ENCODE measurements at regions of chr7 and their contacts with region 1.

Region 1: GRCh38 chr7:107044347-107045194 is at the start of gene PRKAR2B:
- DNase-seq: peak; percentile 98 to 100 (median 98)
- ATAC-seq: peak; percentile 83
- H3K4me3 ChIP-seq: peak within 1 kb of the TSS; percentile 84
- H3K27ac ChIP-seq: peak within 1 kb of the TSS; percentile 73
- H3K4me1 ChIP-seq: peaks cover 12 to 39% of the 10 kb centered on the region in 2 experiments
- H3K27me3 ChIP-seq: no peaks in the 10 kb centered on the region
- CTCF ChIP-seq: peak in 2 of 3 experiments; percentile 44 to 54; a peak in 3 of 6 replicates
- EP300 ChIP-seq: no peak; the same call in 1 of the 2 replicates
- POLR2A ChIP-seq: peak; percentile 60; the same call in 1 of the 2 replicates
- RAD21 ChIP-seq: peak; percentile 41 to 54
- polyA plus RNA-seq, gene PRKAR2B: 59.0 to 65.4 TPM

Region 2: DNA sequence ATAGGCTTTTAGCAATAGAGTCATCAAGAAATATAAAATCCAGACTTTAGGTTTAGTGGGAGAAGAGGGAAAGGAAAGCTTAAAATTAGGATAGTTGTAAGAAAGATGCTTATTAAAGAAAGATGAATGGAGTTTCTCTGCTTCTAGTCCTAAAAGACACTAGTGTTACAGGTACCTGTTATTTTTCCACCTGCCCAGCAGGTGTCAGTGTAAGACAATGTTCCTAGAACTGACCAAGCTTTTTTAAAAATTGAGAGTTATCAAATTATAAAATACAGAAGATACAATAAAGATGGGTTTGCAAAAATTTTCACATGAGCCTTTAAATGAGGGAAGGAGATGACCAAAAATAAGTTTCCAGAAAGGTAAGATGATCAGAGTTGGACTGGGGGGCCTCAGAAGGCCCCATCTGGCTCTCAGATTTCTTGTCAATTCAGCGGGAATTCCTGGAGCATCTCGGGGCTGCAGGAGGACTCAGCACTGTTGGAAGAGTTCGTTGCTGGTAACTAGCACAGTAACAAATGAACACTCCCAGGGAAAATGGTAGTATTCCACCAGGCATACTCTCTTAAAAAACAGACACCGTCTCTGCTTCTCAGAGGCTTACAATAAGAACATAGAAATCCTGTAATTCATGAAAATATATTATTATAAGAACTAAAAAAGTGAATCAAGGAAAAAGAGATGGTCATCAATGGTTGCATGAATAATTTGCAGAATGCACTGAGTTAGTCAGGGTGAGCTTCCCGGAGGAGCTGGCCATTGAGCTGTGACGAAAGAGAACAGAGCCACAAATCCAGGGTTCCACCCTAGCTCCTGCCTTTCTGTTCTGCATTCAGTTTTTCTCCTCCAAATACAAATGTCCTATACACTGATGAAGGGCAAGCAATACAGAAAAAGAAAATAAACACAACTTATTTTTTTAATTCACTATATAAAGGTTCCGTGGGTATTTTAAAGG is 251.3 kb before region 1 on chr7:
- CTCF ChIA-PET with region 1: no interaction called
- POLR2A ChIA-PET with region 1: no interaction called
- in situ Hi-C with region 1: no loop called
- intact Hi-C with region 1: loop called (anchors 5 kb)
- DNase-seq: peak; percentile 59 to 78 (median 63)
- ATAC-seq: peak; percentile 53
- H3K4me3 ChIP-seq: no peak overlapping the region
- H3K27ac ChIP-seq: no peak overlapping the region
- H3K4me1 ChIP-seq: peaks cover 0 to 5% of the 10 kb centered on the region in 2 experiments; a peak in 1 of 5 replicates
- H3K27me3 ChIP-seq: no peaks in the 10 kb centered on the region
- CTCF ChIP-seq: peak; percentile 59 to 93 (median 74); a peak in 5 of 6 replicates
- EP300 ChIP-seq: no peak
- POLR2A ChIP-seq: no peak
- RAD21 ChIP-seq: peak; percentile 91 to 94

Region 3: GRCh38 chr7:106840342-106840741 is 204.2 kb before region 1 on chr7:
- CTCF ChIA-PET with region 1: no interaction called
- POLR2A ChIA-PET with region 1: no interaction called
- in situ Hi-C with region 1: no loop called
- intact Hi-C with region 1: no loop called
- DNase-seq: no peak
- ATAC-seq: no peak
- H3K4me3 ChIP-seq: no peak overlapping the region
- H3K27ac ChIP-seq: no peak overlapping the region
- H3K4me1 ChIP-seq: no peaks in the 10 kb centered on the region
- H3K27me3 ChIP-seq: no peaks in the 10 kb centered on the region; a peak in 1 of 5 replicates
- CTCF ChIP-seq: no peak
- EP300 ChIP-seq: no peak
- POLR2A ChIP-seq: no peak
- RAD21 ChIP-seq: no peak

Region 4: GRCh38 chr7:106952658-106953231 is 91.8 kb before region 1 on chr7:
- CTCF ChIA-PET with region 1: interaction called, 4 read pairs
- POLR2A ChIA-PET with region 1: interaction called, 6 read pairs
- in situ Hi-C with region 1: loop called (anchors 5 kb)
- intact Hi-C with region 1: loop called (anchors 1 kb)
- DNase-seq: peak; percentile 66 to 95 (median 78)
- ATAC-seq: peak; percentile 92
- H3K4me3 ChIP-seq: no peak overlapping the region
- H3K27ac ChIP-seq: peak overlapping the region; percentile 45
- H3K4me1 ChIP-seq: peaks cover 19 to 34% of the 10 kb centered on the region in 2 experiments
- H3K27me3 ChIP-seq: no peaks in the 10 kb centered on the region
- CTCF ChIP-seq: no peak
- EP300 ChIP-seq: peak; percentile 84
- POLR2A ChIP-seq: no peak
- RAD21 ChIP-seq: peak; percentile 24 to 46

Region 5: GRCh38 chr7:107014387-107015023 is 30.1 kb before region 1 on chr7:
- CTCF ChIA-PET with region 1: no interaction called
- POLR2A ChIA-PET with region 1: interaction called, 3 read pairs
- in situ Hi-C with region 1: no loop called
- intact Hi-C with region 1: loop called (anchors 1 kb)
- DNase-seq: no peak
- ATAC-seq: no peak
- H3K4me3 ChIP-seq: no peak overlapping the region
- H3K27ac ChIP-seq: peak overlapping the region; percentile 6; the same call in 1 of the 3 replicates
- H3K4me1 ChIP-seq: peaks cover 27 to 61% of the 10 kb centered on the region in 2 experiments
- H3K27me3 ChIP-seq: no peaks in the 10 kb centered on the region
- CTCF ChIP-seq: no peak
- EP300 ChIP-seq: no peak
- POLR2A ChIP-seq: no peak
- RAD21 ChIP-seq: no peak

Region 6: DNA sequence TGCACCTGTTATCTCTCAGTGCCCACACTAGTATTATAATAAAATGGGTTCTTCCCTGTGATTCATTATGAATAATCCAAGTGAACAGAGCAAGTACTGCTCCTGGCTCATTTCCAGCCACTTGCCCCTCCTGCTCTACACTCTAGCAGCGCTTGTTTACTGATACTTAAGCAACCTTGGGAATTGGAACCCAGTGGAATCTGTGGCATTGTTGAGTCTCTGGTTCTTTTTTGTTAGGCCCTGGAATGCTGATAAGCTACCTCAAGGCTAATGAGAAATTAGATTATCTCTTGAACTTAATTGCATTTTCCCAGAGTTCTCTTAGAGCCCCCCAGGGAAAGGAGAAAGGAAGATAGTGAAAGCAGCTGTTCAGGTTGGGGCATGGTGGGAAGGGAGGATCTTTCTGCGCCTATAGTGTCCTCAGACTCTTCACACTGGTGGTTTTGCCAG is 34.0 kb after region 1 on chr7:
- CTCF ChIA-PET with region 1: no interaction called
- POLR2A ChIA-PET with region 1: interaction called, 3 read pairs
- in situ Hi-C with region 1: no loop called
- intact Hi-C with region 1: loop called (anchors 2 kb)
- DNase-seq: peak; percentile 49 to 74 (median 61)
- ATAC-seq: peak; percentile 33
- H3K4me3 ChIP-seq: no peak overlapping the region
- H3K27ac ChIP-seq: peak overlapping the region; percentile 65
- H3K4me1 ChIP-seq: peaks cover 27 to 64% of the 10 kb centered on the region in 2 experiments
- H3K27me3 ChIP-seq: no peaks in the 10 kb centered on the region
- CTCF ChIP-seq: no peak
- EP300 ChIP-seq: no peak
- POLR2A ChIP-seq: no peak
- RAD21 ChIP-seq: no peak

Region 7: GRCh38 chr7:107090457-107090856 is 45.9 kb after region 1 on chr7:
- CTCF ChIA-PET with region 1: no interaction called
- POLR2A ChIA-PET with region 1: no interaction called
- in situ Hi-C with region 1: no loop called
- intact Hi-C with region 1: no loop called
- DNase-seq: peak in 1 of 4 experiments; percentile 49
- ATAC-seq: peak; percentile 70
- H3K4me3 ChIP-seq: no peak overlapping the region
- H3K27ac ChIP-seq: no peak overlapping the region
- H3K4me1 ChIP-seq: peaks cover 21 to 38% of the 10 kb centered on the region in 2 experiments
- H3K27me3 ChIP-seq: no peaks in the 10 kb centered on the region
- CTCF ChIP-seq: no peak
- EP300 ChIP-seq: no peak
- POLR2A ChIP-seq: no peak
- RAD21 ChIP-seq: no peak

Region 8: DNA sequence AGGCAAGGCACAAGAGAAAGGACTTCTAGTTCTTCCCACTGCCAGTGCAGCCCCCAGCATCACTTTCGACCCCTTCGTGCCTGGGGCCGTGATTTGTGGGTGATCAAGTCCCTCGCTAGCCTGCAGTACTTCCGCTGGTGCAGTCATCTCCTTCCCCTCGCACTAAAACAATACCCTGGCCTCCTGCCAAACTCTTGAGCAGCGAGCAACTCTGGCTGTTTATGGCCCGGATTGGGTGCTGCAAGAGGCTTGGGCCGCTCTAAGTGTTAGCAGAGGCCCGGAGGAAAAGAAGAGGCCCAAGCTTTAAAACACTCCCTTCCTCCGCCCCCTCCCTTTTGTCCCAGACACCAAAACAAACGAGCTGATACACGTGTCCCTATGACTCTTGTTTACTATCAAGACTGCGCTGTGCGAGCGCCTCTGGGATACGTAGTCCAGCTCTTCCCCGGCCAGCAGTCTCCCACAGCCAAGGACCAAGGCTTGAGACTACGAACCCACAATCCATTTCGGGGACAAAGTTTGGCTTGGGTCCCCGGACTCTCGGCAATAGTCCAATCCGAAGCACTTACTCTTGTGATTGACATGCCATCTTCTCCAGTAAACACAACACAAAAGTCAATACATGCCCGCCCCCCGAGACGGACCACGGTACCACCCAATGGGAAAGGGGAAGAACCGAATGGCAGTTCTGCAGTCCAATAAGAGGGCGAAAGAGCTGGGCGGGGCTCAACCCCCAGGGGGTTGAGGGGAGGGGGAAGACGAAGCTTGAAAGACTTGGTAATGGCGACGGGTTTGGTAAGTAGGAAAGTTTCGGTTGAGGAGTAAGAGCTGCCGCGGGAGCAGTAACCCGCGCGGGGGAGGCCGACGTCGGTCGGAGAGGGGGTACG is 123.9 kb after region 1 on chr7 and contains the start of gene HBP1:
- CTCF ChIA-PET with region 1: no interaction called
- POLR2A ChIA-PET with region 1: interaction called, 3 read pairs
- in situ Hi-C with region 1: no loop called
- intact Hi-C with region 1: loop called (anchors 2 kb)
- DNase-seq: peak; percentile 96 to 100 (median 98)
- ATAC-seq: peak; percentile 89
- H3K4me3 ChIP-seq: peak within 1 kb of the TSS; percentile 74
- H3K27ac ChIP-seq: peak within 1 kb of the TSS; percentile 93
- H3K4me1 ChIP-seq: peaks cover 5 to 21% of the 10 kb centered on the region in 2 experiments
- H3K27me3 ChIP-seq: no peaks in the 10 kb centered on the region
- CTCF ChIP-seq: 0 out of 6 replicates have a peak, but pooled peaks of 1 of the 3 experiments have one; percentile 10
- EP300 ChIP-seq: no peak; the same call in 1 of the 2 replicates
- POLR2A ChIP-seq: peak; percentile 72
- RAD21 ChIP-seq: no peak
- polyA plus RNA-seq, gene HBP1: 37.9 to 44.9 TPM